Keratinocyte (primary cell): ENCODE measurements at regions of chr7 and their contacts with region 1.

Region 1: DNA sequence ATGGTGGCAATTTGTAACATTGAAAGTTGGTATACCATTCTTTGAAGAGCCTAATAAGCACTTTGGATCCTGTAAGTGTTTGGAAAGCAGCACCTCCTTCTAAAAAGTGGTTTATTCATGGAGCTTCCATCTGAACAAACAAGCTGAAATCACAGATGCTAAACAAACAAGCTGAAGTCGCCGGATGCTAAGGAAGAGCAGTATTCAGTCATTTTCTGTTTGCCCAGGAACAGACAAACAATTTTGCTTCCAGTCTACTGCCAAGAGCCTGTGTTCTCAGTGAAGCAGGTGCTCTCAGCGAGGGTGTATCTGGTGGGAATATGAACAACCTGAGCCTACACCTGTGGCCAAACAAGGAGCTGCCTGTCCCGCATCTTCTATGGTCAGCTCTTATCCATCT is 6.3 kb downstream of the COL28A1 start:
- DNase-seq: no peak
- H3K4me3 ChIP-seq: no peak overlapping the region
- H3K27ac ChIP-seq: no peak overlapping the region
- H3K4me1 ChIP-seq: no peaks in the 10 kb centered on the region
- H3K27me3 ChIP-seq: no peaks in the 10 kb centered on the region
- CTCF ChIP-seq: no peak

Region 2: GRCh38 chr7:6917258-6917657 is 612.1 kb before region 1 on chr7:
- dilution Hi-C with region 1: no loop called
- DNase-seq: no peak
- H3K4me3 ChIP-seq: no peak overlapping the region
- H3K27ac ChIP-seq: no peak overlapping the region
- H3K4me1 ChIP-seq: no peaks in the 10 kb centered on the region
- H3K27me3 ChIP-seq: no peaks in the 10 kb centered on the region
- CTCF ChIP-seq: no peak

Region 3: DNA sequence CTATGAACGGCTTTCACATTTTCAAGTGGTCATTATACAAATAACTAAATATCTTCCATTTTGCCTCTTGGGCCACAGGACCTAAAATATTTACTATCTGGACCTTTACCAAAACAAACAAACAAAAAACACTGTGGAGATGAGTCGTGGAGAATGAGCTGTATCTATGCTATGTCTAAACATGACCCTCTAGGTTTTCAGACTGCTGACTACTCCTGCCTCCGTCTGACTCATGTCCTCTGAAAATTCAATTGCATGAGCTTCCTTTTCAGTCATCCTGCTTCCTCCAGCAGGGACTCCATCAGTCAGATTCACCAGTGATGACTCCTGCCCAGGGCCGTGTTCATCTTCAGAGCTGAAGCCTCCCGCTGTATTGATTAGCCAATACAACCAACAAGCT is 90.5 kb before region 1 on chr7:
- dilution Hi-C with region 1: loop called (anchors 25 kb)
- DNase-seq: peak; percentile 88
- H3K4me3 ChIP-seq: no peak overlapping the region
- H3K27ac ChIP-seq: peak overlapping the region; percentile 52
- H3K4me1 ChIP-seq: peaks cover 21% of the 10 kb centered on the region
- H3K27me3 ChIP-seq: no peaks in the 10 kb centered on the region
- CTCF ChIP-seq: peak in 1 of 3 experiments; percentile 8